ENCODE measurements at regions of chr12 and their contacts with region 1.

Region 1: DNA sequence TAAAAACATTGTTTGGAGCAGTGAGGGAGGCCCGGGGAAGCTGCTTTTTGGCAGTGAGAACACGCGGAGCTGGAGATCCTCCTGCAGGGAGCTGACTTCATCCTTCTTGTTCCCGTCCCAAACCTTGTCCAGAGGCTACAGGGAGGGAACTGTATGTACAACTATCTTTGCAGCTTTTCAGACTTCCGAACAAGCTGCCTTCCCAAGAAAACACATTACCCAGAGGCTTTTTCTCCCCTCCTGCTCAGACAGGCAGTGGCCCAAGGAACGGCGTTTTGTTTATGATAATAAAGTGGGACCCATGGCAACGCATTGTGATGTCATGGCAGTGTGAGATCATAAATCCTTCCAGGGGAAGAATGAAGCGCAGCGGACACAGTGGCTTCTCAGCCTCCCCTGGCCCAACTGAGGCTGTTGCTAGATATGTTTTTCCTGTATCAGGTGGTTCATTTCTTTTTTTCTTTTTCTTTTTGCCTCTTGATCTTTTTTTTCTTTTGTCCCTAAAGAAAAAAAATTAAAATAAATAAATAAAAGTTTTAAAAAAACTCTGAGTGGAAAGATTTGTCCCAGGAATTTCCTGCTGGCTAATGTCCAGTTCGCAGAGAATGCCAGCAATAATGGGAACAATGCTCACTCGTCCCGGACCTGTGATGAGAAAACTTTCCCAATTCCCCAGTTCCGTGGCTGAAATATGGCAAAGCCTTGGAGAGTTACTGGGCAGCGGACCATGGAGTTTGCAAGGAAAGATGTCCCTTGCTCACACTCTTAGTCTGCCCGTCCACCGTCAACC is 103.4 kb upstream of the MAP1LC3B2 start:
- DNase-seq: peak; percentile 83
- H3K4me3 ChIP-seq: no peak overlapping the region
- H3K27ac ChIP-seq: peak overlapping the region; percentile 99
- H3K4me1 ChIP-seq: peaks cover 23% of the 10 kb centered on the region
- H3K27me3 ChIP-seq: no peaks in the 10 kb centered on the region
- CTCF ChIP-seq: no peak

Region 2: DNA sequence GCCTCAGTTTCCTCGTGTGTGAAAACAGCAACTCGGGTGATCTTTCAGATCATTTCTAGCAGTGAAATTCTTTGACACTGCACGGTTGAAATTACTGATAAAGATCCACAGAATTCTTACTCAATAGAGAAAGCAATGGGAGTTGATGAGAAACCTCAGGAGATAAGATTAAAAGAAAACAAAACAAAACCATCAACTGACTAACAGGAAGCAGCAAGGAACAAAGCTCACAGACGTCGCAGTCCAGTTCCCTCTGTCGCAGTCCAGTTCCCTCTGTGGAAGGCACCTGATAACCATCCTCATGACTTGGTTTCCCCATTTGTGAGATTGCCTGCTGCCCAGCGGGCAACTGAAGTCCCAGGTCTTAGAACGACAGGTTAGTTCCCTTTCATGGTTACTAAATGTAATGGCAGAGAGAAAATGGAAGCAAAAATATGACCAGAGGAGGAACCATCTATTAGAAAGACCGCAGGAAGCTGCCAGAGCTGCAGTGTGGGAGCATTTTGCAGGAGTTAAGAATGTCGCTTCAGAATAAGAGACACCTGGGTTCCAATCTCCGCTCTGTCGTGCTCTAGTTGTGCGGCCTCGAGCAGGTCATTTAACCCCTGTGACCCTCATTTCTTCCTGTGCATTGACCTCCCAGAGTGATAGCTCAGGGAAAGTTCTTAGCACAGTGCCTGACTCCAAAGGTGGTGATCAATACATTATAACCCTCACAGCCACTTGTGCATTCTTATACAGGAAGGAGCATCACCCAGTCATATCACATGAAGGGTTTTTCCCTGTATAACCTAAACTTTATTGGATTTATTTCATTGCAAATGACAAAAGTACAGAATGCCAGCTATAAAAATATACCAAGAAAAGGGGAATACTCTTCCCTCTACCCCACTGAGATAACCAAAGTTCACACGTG is 173.1 kb before region 1 on chr12:
- CTCF ChIA-PET with region 1: no interaction called
- dilution Hi-C with region 1: no loop called
- in situ Hi-C with region 1: no loop called
- intact Hi-C with region 1: no loop called
- DNase-seq: no peak
- H3K4me3 ChIP-seq: no peak overlapping the region
- H3K27ac ChIP-seq: no peak overlapping the region
- H3K4me1 ChIP-seq: no peaks in the 10 kb centered on the region
- H3K27me3 ChIP-seq: no peaks in the 10 kb centered on the region
- CTCF ChIP-seq: no peak

Region 3: GRCh38 chr12:116408489-116409250 is 47.1 kb before region 1 on chr12:
- CTCF ChIA-PET with region 1: no interaction called
- dilution Hi-C with region 1: loop called (anchors 5 kb)
- in situ Hi-C with region 1: no loop called
- intact Hi-C with region 1: no loop called
- DNase-seq: no peak
- H3K4me3 ChIP-seq: no peak overlapping the region
- H3K27ac ChIP-seq: no peak overlapping the region
- H3K4me1 ChIP-seq: peaks cover 6% of the 10 kb centered on the region
- H3K27me3 ChIP-seq: no peaks in the 10 kb centered on the region
- CTCF ChIP-seq: no peak

Region 4: GRCh38 chr12:116434155-116435011 is 21.4 kb before region 1 on chr12:
- CTCF ChIA-PET with region 1: no interaction called
- dilution Hi-C with region 1: no loop called
- in situ Hi-C with region 1: no loop called
- intact Hi-C with region 1: loop called (anchors 1 kb)
- DNase-seq: peak; percentile 81
- H3K4me3 ChIP-seq: peak overlapping the region in 1 of 3 experiments; percentile 14
- H3K27ac ChIP-seq: peak overlapping the region; percentile 17
- H3K4me1 ChIP-seq: peaks cover 17% of the 10 kb centered on the region
- H3K27me3 ChIP-seq: no peaks in the 10 kb centered on the region
- CTCF ChIP-seq: no peak

Region 5: DNA sequence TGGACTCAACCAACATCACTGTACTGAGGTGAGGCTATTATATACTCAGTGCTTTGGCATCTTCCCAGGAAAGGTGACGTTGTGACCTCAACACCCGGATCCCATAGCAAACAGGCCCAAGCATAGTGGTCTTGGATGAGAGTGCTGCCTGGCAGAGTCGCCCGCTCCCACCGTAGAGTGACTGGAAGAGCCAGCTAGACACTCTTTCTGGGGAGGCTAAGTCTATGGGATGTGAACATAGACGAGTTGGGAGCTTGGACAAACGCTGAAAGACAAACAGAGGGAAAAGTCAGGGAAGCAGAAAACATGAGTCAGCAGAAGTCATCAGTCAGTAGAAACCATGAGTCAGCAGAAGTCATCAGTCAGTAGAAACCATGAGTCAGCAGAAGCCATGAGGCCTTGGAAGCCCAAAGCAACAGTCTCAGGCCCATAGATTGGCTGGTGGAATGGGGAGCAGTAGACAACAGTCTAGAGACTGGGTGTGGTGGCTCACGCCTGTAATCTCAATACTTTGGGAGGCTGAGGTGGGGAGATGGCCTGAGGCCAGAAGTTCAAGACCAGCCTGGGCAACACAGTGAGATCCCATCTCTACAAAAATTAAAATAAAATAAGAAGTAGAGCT is 37.1 kb after region 1 on chr12:
- CTCF ChIA-PET with region 1: no interaction called
- dilution Hi-C with region 1: no loop called
- in situ Hi-C with region 1: no loop called
- intact Hi-C with region 1: loop called (anchors 2 kb)
- DNase-seq: peak; percentile 72
- H3K4me3 ChIP-seq: no peak overlapping the region
- H3K27ac ChIP-seq: peak overlapping the region; percentile 80
- H3K4me1 ChIP-seq: peaks cover 39% of the 10 kb centered on the region
- H3K27me3 ChIP-seq: no peaks in the 10 kb centered on the region
- CTCF ChIP-seq: no peak

Region 6: GRCh38 chr12:116525418-116526001 is 69.8 kb after region 1 on chr12:
- CTCF ChIA-PET with region 1: no interaction called
- dilution Hi-C with region 1: no loop called
- in situ Hi-C with region 1: no loop called
- intact Hi-C with region 1: loop called (anchors 2 kb)
- DNase-seq: peak; percentile 89
- H3K4me3 ChIP-seq: peak overlapping the region in 2 of 3 experiments; percentile 12 to 13
- H3K27ac ChIP-seq: peak overlapping the region; percentile 93
- H3K4me1 ChIP-seq: peaks cover 54% of the 10 kb centered on the region
- H3K27me3 ChIP-seq: no peaks in the 10 kb centered on the region
- CTCF ChIP-seq: no peak

Region 7: DNA sequence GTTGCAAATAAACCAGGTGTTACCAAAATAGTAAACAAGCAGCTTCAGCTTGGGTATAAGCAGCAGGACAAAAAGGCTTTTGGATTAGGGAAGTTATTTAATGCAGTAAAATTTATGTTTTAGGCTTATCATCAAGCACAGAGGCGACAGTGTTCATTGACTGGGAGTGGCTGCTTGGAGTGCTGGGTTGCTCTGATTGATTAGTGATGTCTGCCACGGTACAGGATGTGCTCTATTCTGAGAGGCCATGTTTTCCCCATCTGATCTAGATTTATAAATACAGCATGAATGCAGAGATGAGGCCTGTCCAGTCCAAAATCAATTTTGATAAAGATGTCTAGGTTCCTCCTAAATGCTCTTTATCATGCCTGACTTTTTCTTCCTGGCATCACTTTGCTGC is 186.9 kb after region 1 on chr12:
- CTCF ChIA-PET with region 1: no interaction called
- dilution Hi-C with region 1: no loop called
- in situ Hi-C with region 1: no loop called
- intact Hi-C with region 1: no loop called
- DNase-seq: no peak
- H3K4me3 ChIP-seq: no peak overlapping the region
- H3K27ac ChIP-seq: no peak overlapping the region
- H3K4me1 ChIP-seq: no peaks in the 10 kb centered on the region
- H3K27me3 ChIP-seq: no peaks in the 10 kb centered on the region
- CTCF ChIP-seq: no peak

Measured in mammary epithelial cell (primary cell).